HCT116 (cell line): ENCODE measurements at regions of chr2 and their contacts with region 1.

Region 1: GRCh38 chr2:240840435-240841080 is 20.5 kb upstream of the KIF1A start:
- DNase-seq: peak; percentile 53
- ATAC-seq: peak; percentile 96
- H3K4me3 ChIP-seq: no peak overlapping the region
- H3K27ac ChIP-seq: no peak overlapping the region
- H3K4me1 ChIP-seq: no peaks in the 10 kb centered on the region
- H3K27me3 ChIP-seq: 0 out of 2 replicates have a peak, but pooled peaks cover 2% of the 10 kb centered on the region
- CTCF ChIP-seq: peak; percentile 63 to 93 (median 78)
- POLR2A ChIP-seq: no peak
- RAD21 ChIP-seq: peak; percentile 85

Region 2: DNA sequence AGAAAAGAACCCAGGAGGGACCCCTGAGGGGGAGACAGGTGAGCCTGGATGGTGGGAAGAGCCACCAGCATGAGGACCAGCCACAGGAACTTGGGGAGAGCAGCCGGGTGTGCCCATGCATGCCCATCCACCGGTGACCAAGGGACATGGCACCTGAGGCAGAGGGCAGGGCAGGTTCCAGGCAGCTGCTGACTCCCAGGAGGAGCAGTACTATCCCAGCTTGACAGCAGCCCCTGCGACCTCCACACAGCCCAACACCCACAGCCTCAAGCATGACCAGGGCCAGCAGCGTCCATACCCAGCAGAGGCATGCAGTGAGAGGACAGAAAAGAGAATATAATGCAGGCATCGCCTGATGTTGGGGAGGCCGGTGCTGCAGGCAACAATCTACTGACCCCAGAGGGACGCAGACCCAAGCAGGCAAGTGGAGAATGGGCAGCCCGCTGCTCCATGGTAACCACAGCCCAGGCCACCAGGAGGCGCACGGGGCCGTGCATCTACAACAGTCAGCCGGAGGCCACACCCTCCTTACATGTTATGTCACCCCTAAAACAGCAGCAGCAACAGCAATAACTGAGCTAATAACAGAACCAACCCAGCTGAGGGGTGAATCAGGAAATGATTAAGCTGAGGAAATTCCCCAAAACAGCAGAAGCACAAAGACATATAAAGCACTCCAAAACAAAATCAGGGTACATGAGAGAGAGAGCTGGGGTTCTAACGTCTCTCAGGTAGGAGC is 326.8 kb before region 1 on chr2:
- CTCF ChIA-PET with region 1: interaction called, 17 read pairs
- POLR2A ChIA-PET with region 1: no interaction called
- RAD21 ChIA-PET with region 1: no interaction called
- intact Hi-C with region 1: loop called (anchors 5 kb)
- DNase-seq: peak; percentile 29
- ATAC-seq: peak; percentile 99
- H3K4me3 ChIP-seq: no peak overlapping the region
- H3K27ac ChIP-seq: no peak overlapping the region
- H3K4me1 ChIP-seq: peaks cover 0 to 6% of the 10 kb centered on the region in 2 experiments; a peak in 2 of 4 replicates
- H3K27me3 ChIP-seq: no peaks in the 10 kb centered on the region
- CTCF ChIP-seq: peak; percentile 71 to 97 (median 96); a peak in 5 of 6 replicates
- POLR2A ChIP-seq: no peak
- RAD21 ChIP-seq: peak; percentile 92

Region 3: DNA sequence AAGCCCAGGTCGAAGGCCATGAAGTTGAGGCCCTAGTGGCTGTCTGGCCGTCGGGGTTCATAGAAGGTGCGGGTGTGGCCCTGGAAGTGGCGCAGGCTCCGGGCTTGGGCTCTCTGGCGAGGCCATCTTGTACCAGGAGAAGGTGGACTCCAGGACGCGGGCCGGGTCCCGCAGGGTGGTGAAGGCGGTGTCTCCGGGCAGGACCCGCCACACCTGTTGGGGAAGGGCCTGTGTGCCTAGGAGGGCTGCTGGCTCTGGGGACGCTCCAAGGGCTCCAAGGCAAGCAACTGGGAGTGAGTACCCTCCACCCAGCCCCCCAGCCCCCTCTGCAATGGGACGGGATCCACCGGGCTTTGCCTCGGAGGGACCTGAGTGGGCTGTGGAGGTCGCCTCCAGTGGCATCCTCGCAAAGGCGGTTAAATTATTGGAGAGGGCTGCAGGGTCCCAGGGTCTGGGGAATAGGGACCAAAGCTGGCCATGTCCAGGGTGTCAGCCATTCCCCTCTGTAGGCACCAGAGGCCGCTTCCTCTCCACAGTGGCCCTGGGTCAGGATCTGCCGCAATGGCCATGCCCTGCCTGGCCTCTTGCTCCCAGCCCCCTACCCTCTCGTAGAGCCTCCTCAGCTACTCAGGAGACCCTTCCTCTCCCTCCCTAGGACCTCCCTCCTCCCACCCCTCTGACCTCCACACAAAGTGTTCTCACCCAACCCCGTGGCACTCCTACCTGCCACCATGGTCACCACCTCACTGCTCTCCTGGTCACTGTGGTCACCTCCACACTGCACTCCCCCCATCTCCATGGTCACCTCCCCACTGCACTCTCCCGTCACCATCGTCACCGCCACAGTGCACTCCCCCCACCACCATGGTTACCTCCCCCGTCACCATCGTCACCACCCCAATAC is 138.6 kb before region 1 on chr2:
- CTCF ChIA-PET with region 1: no interaction called
- POLR2A ChIA-PET with region 1: no interaction called
- RAD21 ChIA-PET with region 1: no interaction called
- intact Hi-C with region 1: no loop called
- DNase-seq: no peak
- ATAC-seq: no peak
- H3K4me3 ChIP-seq: no peak overlapping the region
- H3K27ac ChIP-seq: no peak overlapping the region
- H3K4me1 ChIP-seq: no peaks in the 10 kb centered on the region
- H3K27me3 ChIP-seq: no peaks in the 10 kb centered on the region
- CTCF ChIP-seq: no peak
- POLR2A ChIP-seq: no peak
- RAD21 ChIP-seq: no peak

Region 4: DNA sequence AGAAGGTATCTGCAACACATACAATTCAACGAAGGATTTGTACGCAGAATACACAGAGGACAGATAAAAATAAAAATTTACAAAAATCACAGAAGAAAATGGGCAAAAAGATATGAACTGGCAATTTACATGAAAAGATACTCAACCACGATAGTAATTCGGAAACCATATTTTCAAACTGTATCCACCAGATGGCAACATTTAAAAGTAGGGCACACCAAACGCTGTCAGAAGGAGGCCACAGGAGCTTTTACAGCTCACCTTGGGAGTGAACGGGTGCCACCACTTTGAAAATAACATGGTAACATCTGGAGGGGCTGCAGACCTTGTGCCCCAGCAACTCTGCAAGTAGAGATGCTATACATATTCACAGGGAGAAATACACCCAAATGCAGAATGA is 30.4 kb before region 1 on chr2:
- CTCF ChIA-PET with region 1: interaction called, 15 read pairs
- POLR2A ChIA-PET with region 1: no interaction called
- RAD21 ChIA-PET with region 1: interaction called, 5 to 7 read pairs
- intact Hi-C with region 1: loop called (anchors 1 kb)
- DNase-seq: no peak
- ATAC-seq: peak; percentile 60
- H3K4me3 ChIP-seq: no peak overlapping the region
- H3K27ac ChIP-seq: no peak overlapping the region
- H3K4me1 ChIP-seq: no peaks in the 10 kb centered on the region
- H3K27me3 ChIP-seq: no peaks in the 10 kb centered on the region
- CTCF ChIP-seq: peak; percentile 14 to 47 (median 46); a peak in 3 of 6 replicates
- POLR2A ChIP-seq: no peak
- RAD21 ChIP-seq: peak; percentile 48

Region 5: DNA sequence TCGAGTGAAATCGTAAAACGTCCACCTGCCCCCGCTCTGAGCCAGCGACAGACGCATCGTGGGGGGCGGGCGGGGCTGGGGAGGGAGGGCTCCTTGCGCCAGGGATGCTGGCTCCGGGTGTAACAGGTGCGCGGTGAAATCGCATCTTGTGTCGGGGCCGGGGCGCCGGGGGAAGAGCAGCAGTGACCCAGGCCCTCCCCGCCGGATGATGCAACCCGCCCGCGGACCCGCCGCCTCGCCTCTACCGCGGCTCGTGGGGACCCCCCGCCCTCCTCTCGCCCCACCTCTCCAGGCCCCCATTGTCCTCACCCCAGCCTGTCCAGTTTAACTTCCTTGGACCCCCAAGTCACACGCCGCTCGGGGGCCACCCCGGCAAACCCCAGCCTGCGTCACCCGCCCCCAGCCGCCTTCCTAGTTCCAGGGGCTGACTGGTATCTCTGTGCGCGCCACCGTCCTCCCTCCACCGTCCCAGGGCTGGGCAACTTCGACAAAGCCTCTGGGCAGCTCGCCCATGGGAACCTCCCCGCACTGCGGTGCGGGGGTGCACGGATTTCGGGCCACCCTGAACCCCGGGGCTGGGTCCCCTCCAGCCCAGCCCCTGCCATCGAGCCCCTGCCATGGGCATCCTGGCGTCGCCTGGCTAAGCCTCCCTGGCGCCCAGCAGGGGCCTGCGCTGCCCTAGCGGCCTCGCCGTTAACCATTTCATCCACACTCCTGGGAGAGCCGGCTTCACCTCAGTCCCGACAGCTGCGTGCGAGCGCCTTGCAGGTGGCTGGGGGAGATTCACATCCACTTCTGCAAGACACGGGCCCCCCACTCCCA is 19.7 kb before region 1 on chr2:
- CTCF ChIA-PET with region 1: no interaction called
- POLR2A ChIA-PET with region 1: no interaction called
- RAD21 ChIA-PET with region 1: no interaction called
- intact Hi-C with region 1: no loop called
- DNase-seq: no peak
- ATAC-seq: no peak
- H3K4me3 ChIP-seq: no peak overlapping the region
- H3K27ac ChIP-seq: no peak overlapping the region
- H3K4me1 ChIP-seq: no peaks in the 10 kb centered on the region
- H3K27me3 ChIP-seq: no peaks in the 10 kb centered on the region
- CTCF ChIP-seq: no peak
- POLR2A ChIP-seq: no peak
- RAD21 ChIP-seq: no peak